ENCODE measurements at regions of chr4 and their contacts with region 1.

Region 1: GRCh38 chr4:47836641-47837093 is 1.2 kb downstream of the CORIN start:
- DNase-seq: peak; percentile 59 to 76
- ATAC-seq: peak; percentile 93 to 97 (median 94)
- H3K4me3 ChIP-seq: peak overlapping the region; percentile 65
- H3K27ac ChIP-seq: no peak overlapping the region
- H3K4me1 ChIP-seq: peaks cover 15% of the 10 kb centered on the region
- H3K27me3 ChIP-seq: peaks cover 0 to 26% (median 6%) of the 10 kb centered on the region in 3 donors
- CTCF ChIP-seq: peak; percentile 70

Region 2: GRCh38 chr4:47451657-47452056 is 385.0 kb before region 1 on chr4:
- intact Hi-C with region 1: no loop called
- DNase-seq: no peak
- ATAC-seq: no peak
- H3K4me3 ChIP-seq: no peak overlapping the region
- H3K27ac ChIP-seq: no peak overlapping the region
- H3K4me1 ChIP-seq: no peaks in the 10 kb centered on the region
- H3K27me3 ChIP-seq: no peaks in the 10 kb centered on the region
- CTCF ChIP-seq: no peak

Region 3: GRCh38 chr4:47686294-47686872 is 150.3 kb before region 1 on chr4:
- intact Hi-C with region 1: loop called (anchors 5 kb)
- DNase-seq: peak in 1 of 2 donors; percentile 18
- ATAC-seq: peak in 3 of 4 donors; percentile 51 to 75 (median 62)
- H3K4me3 ChIP-seq: no peak overlapping the region
- H3K27ac ChIP-seq: no peak overlapping the region
- H3K4me1 ChIP-seq: no peaks in the 10 kb centered on the region
- H3K27me3 ChIP-seq: no peaks in the 10 kb centered on the region
- CTCF ChIP-seq: peak; percentile 58

Region 4: DNA sequence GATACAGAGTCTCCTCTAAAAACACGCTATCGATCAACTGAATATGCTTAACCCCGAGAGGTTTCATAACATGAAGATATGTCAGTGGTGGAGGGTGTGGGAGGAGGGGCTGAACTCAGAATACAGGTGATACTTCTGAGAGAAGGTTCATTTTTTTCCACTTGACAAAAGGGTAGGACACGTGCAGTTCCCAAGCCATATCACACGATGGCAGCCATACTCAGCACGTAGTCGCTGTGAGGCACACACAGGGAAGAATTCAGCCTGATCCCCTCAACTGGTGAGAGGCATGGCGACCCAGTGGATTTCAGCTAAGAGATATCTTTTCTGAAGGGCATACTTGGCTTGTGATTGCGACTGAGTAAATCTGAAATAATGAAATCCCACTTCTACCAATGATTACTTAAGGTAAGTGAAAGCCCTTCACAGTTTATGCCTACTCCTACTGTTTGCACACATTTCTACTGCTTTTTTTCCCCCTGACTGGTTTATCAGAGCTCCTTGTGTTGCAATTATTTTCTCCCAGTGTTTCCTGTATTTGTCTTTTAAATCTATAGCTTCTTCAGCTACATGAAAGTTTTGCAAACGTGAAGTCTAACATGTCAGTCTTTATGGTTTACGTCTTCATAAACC is 131.9 kb before region 1 on chr4:
- intact Hi-C with region 1: loop called in 1 of 2 experiments (anchors 1 kb)
- DNase-seq: no peak
- ATAC-seq: peak in 3 of 4 donors; percentile 45 to 70 (median 69)
- H3K4me3 ChIP-seq: no peak overlapping the region
- H3K27ac ChIP-seq: no peak overlapping the region
- H3K4me1 ChIP-seq: no peaks in the 10 kb centered on the region
- H3K27me3 ChIP-seq: peaks cover 0 to 2% (median 0%) of the 10 kb centered on the region in 3 donors
- CTCF ChIP-seq: peak; percentile 42

Region 5: GRCh38 chr4:47972181-47972580 is 135.5 kb after region 1 on chr4:
- intact Hi-C with region 1: no loop called
- DNase-seq: no peak
- ATAC-seq: no peak
- H3K4me3 ChIP-seq: no peak overlapping the region
- H3K27ac ChIP-seq: no peak overlapping the region
- H3K4me1 ChIP-seq: no peaks in the 10 kb centered on the region
- H3K27me3 ChIP-seq: no peaks in the 10 kb centered on the region
- CTCF ChIP-seq: no peak

Measured in psoas muscle (tissue), 8 donors.